Ascending aorta (tissue), 2 donors: ENCODE measurements at regions of chr9 and their contacts with region 1.

Region 1: GRCh38 chr9:99819856-99820684 is 1.6 kb upstream of the NR4A3 start:
- DNase-seq: peak; percentile 93 to 98
- H3K4me3 ChIP-seq: peak overlapping the region; percentile 81 to 82
- H3K27ac ChIP-seq: peak overlapping the region; percentile 98 to 99
- H3K4me1 ChIP-seq: peaks cover 8 to 24% of the 10 kb centered on the region in 2 donors
- H3K27me3 ChIP-seq: no peaks in the 10 kb centered on the region
- CTCF ChIP-seq: no peak

Region 2: DNA sequence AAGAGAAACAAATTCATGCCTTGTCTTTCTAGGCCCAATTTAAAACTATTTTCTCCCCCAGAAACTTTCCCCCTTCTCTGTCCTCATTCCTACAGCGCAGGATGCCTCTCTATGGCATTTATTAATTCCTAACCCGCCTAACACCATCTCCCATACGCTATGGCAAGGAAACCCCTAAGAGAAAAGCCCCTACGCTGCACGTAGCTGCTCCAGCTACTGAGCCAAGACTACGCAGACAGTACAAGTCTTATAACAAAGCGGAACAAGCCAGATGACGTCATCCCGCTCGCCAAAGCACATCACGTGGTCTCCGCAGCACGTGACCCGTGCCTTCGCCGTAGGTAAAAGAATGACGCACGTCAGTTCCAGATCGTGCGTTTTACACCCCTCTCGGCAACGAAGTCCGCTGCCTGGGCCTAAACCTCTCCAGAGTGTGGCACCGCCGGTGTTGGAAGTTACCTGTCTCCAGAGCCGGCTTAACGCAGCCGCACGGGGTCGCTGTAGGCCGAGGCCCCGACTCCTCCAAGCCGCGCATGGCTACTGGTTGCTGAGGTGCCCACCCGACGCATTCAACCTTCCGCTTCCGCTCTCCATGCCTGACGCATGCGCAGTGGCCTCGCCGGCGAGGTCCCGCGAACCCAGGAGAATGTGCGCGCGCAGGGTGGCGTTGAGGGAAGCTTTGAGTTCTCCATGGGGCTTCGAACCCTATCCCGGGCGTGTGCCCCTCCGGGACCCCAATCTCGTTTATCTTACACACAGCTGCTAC is 1897.9 kb before region 1 on chr9 and contains the start of gene TRMO:
- intact Hi-C with region 1: loop called (anchors 5 kb)
- DNase-seq: peak; percentile 93 to 99
- H3K4me3 ChIP-seq: peak within 1 kb of the TSS; percentile 58 to 64
- H3K27ac ChIP-seq: peak within 1 kb of the TSS; percentile 92 to 94
- H3K4me1 ChIP-seq: peaks cover 3 to 19% of the 10 kb centered on the region in 2 donors
- H3K27me3 ChIP-seq: no peaks in the 10 kb centered on the region
- CTCF ChIP-seq: peak; percentile 29 to 62 (median 30)
- total RNA-seq, gene TRMO: 24.8 TPM

Region 3: GRCh38 chr9:98989036-98990000 is 830.8 kb before region 1 on chr9:
- intact Hi-C with region 1: loop called (anchors 5 kb)
- DNase-seq: peak; percentile 81 to 98
- H3K4me3 ChIP-seq: no peak overlapping the region
- H3K27ac ChIP-seq: peak overlapping the region; percentile 81 to 82
- H3K4me1 ChIP-seq: peaks cover 18 to 29% of the 10 kb centered on the region in 2 donors
- H3K27me3 ChIP-seq: no peaks in the 10 kb centered on the region
- CTCF ChIP-seq: peak; percentile 27 to 44 (median 36)

Region 4: GRCh38 chr9:99266255-99267023 is 553.6 kb before region 1 on chr9:
- intact Hi-C with region 1: loop called (anchors 5 kb)
- DNase-seq: peak in 1 of 2 donors; percentile 72
- H3K4me3 ChIP-seq: no peak overlapping the region
- H3K27ac ChIP-seq: no peak overlapping the region
- H3K4me1 ChIP-seq: no peaks in the 10 kb centered on the region
- H3K27me3 ChIP-seq: no peaks in the 10 kb centered on the region
- CTCF ChIP-seq: peak; percentile 47 to 81 (median 77)

Region 5: GRCh38 chr9:99807276-99807852 is 12.7 kb before region 1 on chr9:
- intact Hi-C with region 1: loop called (anchors 2 kb)
- DNase-seq: peak in 1 of 2 donors; percentile 80
- H3K4me3 ChIP-seq: no peak overlapping the region
- H3K27ac ChIP-seq: no peak overlapping the region
- H3K4me1 ChIP-seq: no peaks in the 10 kb centered on the region
- H3K27me3 ChIP-seq: no peaks in the 10 kb centered on the region
- CTCF ChIP-seq: peak; percentile 31 to 77 (median 66)

Region 6: DNA sequence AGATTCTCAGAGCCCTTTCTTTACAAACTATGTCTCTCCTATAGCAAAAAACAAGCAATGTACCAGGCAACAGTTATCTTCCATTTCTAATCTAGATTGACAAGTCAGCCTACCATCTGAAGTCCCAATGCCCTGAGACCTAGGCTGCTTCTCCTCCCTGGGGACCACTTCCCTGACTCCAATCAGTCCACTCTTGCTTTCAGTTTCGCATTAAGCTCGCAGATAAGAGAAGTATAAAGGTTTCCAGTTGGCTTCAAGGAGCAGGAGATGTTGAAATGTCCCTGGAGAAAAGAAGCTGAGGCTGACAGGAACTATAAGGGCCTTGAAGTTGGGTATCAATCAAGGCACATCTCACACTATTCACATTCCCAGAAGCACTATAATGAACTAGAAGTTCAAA is 246.5 kb after region 1 on chr9:
- intact Hi-C with region 1: no loop called
- DNase-seq: no peak
- H3K4me3 ChIP-seq: peak overlapping the region in 1 of 2 donors; percentile 30
- H3K27ac ChIP-seq: peak overlapping the region in 1 of 2 donors; percentile 34
- H3K4me1 ChIP-seq: peaks cover 0 to 3% of the 10 kb centered on the region in 2 donors
- H3K27me3 ChIP-seq: no peaks in the 10 kb centered on the region
- CTCF ChIP-seq: no peak

Region 7: DNA sequence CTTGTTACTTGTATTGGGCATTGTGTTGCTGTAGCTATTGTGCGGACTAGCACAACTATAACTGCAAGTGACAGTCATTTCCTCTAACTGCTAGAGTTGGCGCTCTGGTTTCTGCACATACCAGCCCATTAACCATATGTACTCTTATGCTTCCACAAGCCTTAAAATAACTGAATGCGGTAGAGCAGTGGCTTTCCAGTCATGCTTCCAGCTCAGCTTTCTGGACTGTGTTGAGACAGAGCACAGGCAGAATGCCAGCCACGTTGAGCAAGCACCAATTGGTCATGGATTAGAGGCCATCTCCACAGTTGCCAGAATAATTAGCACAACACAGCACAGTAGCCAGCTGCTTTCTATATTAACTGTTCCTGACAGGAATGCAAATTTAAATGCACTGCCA is 291.2 kb after region 1 on chr9:
- intact Hi-C with region 1: loop called (anchors 5 kb)
- DNase-seq: peak; percentile 21 to 91
- H3K4me3 ChIP-seq: no peak overlapping the region
- H3K27ac ChIP-seq: peak overlapping the region in 1 of 2 donors; percentile 22
- H3K4me1 ChIP-seq: peaks cover 0 to 6% of the 10 kb centered on the region in 2 donors
- H3K27me3 ChIP-seq: no peaks in the 10 kb centered on the region
- CTCF ChIP-seq: no peak

Region 8: GRCh38 chr9:100437860-100438805 is 618.1 kb after region 1 on chr9:
- intact Hi-C with region 1: loop called (anchors 5 kb)
- DNase-seq: peak in 1 of 2 donors; percentile 90
- H3K4me3 ChIP-seq: no peak overlapping the region
- H3K27ac ChIP-seq: no peak overlapping the region
- H3K4me1 ChIP-seq: peaks cover 0 to 3% of the 10 kb centered on the region in 2 donors
- H3K27me3 ChIP-seq: no peaks in the 10 kb centered on the region
- CTCF ChIP-seq: peak; percentile 42 to 94 (median 90)